GM12878 (cell line): ENCODE measurements at regions of chr18 and their contacts with region 1.

Region 1: GRCh38 chr18:50128506-50129271 is 66.3 kb downstream of the MYO5B start:
- DNase-seq: no peak
- ATAC-seq: peak; percentile 74
- H3K4me3 ChIP-seq: no peak overlapping the region
- H3K27ac ChIP-seq: no peak overlapping the region
- H3K4me1 ChIP-seq: no peaks in the 10 kb centered on the region
- H3K27me3 ChIP-seq: no peaks in the 10 kb centered on the region
- CTCF ChIP-seq: no peak
- EP300 ChIP-seq: 0 out of 4 replicates have a peak, but pooled peaks of 1 of the 2 experiments have one; percentile 5
- POLR2A ChIP-seq: no peak
- RAD21 ChIP-seq: no peak

Region 2: GRCh38 chr18:50099725-50100407 is 28.8 kb before region 1 on chr18:
- CTCF ChIA-PET with region 1: interaction called, 6 read pairs
- POLR2A ChIA-PET with region 1: interaction called, 5 read pairs
- RAD21 ChIA-PET with region 1: interaction called, 14 read pairs
- SMC1A ChIA-PET with region 1: interaction called, 38 read pairs
- in situ Hi-C with region 1: no loop called
- intact Hi-C with region 1: no loop called
- DNase-seq: peak; percentile 36
- ATAC-seq: peak; percentile 72
- H3K4me3 ChIP-seq: no peak overlapping the region
- H3K27ac ChIP-seq: no peak overlapping the region
- H3K4me1 ChIP-seq: peaks cover 6% of the 10 kb centered on the region
- H3K27me3 ChIP-seq: peaks cover 0 to 2% of the 10 kb centered on the region in 2 experiments; a peak in 2 of 4 replicates
- CTCF ChIP-seq: no peak
- EP300 ChIP-seq: peak; percentile 47 to 64; a peak in 2 of 4 replicates
- POLR2A ChIP-seq: no peak
- RAD21 ChIP-seq: no peak

Region 3: DNA sequence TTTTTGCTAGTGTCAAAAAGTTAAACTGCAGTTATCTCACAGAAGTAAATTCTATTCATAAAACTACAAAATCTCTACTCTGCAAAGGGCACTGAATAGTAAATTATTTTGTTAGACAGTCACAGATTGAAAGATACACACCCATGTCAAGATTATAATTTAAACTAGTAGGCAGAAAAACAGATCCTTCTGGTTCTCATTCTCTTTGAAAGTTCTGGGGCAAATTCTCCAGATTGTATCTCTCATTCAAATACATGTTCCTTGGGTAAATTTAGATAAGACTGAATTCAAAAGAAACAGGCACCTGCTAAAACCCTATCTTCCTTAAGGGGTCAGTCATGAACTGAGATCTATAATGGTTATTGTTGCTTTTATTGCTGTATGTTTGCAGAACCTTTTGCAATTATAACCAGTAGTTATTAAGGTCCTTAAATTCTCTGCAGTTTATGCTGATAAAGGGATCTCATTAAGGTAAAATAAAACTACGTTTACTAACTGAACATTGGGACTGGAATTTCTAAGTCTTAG is 17.4 kb before region 1 on chr18:
- CTCF ChIA-PET with region 1: interaction called, 3 read pairs
- POLR2A ChIA-PET with region 1: interaction called, 5 read pairs
- RAD21 ChIA-PET with region 1: interaction called, 6 read pairs
- SMC1A ChIA-PET with region 1: interaction called, 76 read pairs
- in situ Hi-C with region 1: no loop called
- intact Hi-C with region 1: no loop called
- DNase-seq: no peak
- ATAC-seq: peak; percentile 52; the same call in 2 of the 3 replicates
- H3K4me3 ChIP-seq: no peak overlapping the region
- H3K27ac ChIP-seq: no peak overlapping the region
- H3K4me1 ChIP-seq: no peaks in the 10 kb centered on the region
- H3K27me3 ChIP-seq: peaks cover 0 to 12% of the 10 kb centered on the region in 2 experiments; a peak in 2 of 4 replicates
- CTCF ChIP-seq: peak; percentile 7 to 52 (median 21); a peak in 4 of 6 replicates
- EP300 ChIP-seq: no peak
- POLR2A ChIP-seq: no peak
- RAD21 ChIP-seq: peak; percentile 63

Region 4: GRCh38 chr18:50117863-50118262 is 10.8 kb before region 1 on chr18:
- CTCF ChIA-PET with region 1: interaction called, 16 read pairs
- POLR2A ChIA-PET with region 1: interaction called, 6 read pairs
- RAD21 ChIA-PET with region 1: interaction called, 7 read pairs
- SMC1A ChIA-PET with region 1: interaction called, 76 read pairs
- in situ Hi-C with region 1: no loop called
- intact Hi-C with region 1: no loop called
- DNase-seq: no peak
- ATAC-seq: no peak
- H3K4me3 ChIP-seq: no peak overlapping the region
- H3K27ac ChIP-seq: no peak overlapping the region
- H3K4me1 ChIP-seq: no peaks in the 10 kb centered on the region
- H3K27me3 ChIP-seq: peaks cover 0 to 4% of the 10 kb centered on the region in 2 experiments; a peak in 2 of 4 replicates
- CTCF ChIP-seq: no peak
- EP300 ChIP-seq: no peak
- POLR2A ChIP-seq: no peak
- RAD21 ChIP-seq: no peak

Region 5: GRCh38 chr18:50177294-50177992 is 48.8 kb after region 1 on chr18:
- CTCF ChIA-PET with region 1: interaction called, 4 read pairs
- POLR2A ChIA-PET with region 1: interaction called, 5 read pairs
- RAD21 ChIA-PET with region 1: interaction called, 8 read pairs
- SMC1A ChIA-PET with region 1: interaction called, 15 read pairs
- in situ Hi-C with region 1: no loop called
- intact Hi-C with region 1: loop called (anchors 10 kb)
- DNase-seq: no peak
- ATAC-seq: no peak
- H3K4me3 ChIP-seq: no peak overlapping the region
- H3K27ac ChIP-seq: no peak overlapping the region
- H3K4me1 ChIP-seq: no peaks in the 10 kb centered on the region
- H3K27me3 ChIP-seq: peaks cover 0 to 4% of the 10 kb centered on the region in 2 experiments; a peak in 1 of 4 replicates
- CTCF ChIP-seq: no peak
- EP300 ChIP-seq: no peak
- POLR2A ChIP-seq: no peak
- RAD21 ChIP-seq: no peak

Region 6: GRCh38 chr18:50183556-50183955 is 54.9 kb after region 1 on chr18:
- CTCF ChIA-PET with region 1: interaction called, 10 read pairs
- POLR2A ChIA-PET with region 1: interaction called, 5 read pairs
- RAD21 ChIA-PET with region 1: interaction called, 40 read pairs
- SMC1A ChIA-PET with region 1: interaction called, 107 read pairs
- in situ Hi-C with region 1: no loop called
- intact Hi-C with region 1: loop called (anchors 10 kb)
- DNase-seq: no peak
- ATAC-seq: peak; percentile 50; the same call in 2 of the 3 replicates
- H3K4me3 ChIP-seq: no peak overlapping the region
- H3K27ac ChIP-seq: no peak overlapping the region
- H3K4me1 ChIP-seq: no peaks in the 10 kb centered on the region
- H3K27me3 ChIP-seq: 0 out of 4 replicates have a peak, but pooled peaks cover 0 to 2% of the 10 kb centered on the region in 2 experiments
- CTCF ChIP-seq: no peak
- EP300 ChIP-seq: no peak
- POLR2A ChIP-seq: no peak
- RAD21 ChIP-seq: no peak